AG04450 (cell line): ENCODE measurements at regions of chr5 and their contacts with region 1.

Region 1: DNA sequence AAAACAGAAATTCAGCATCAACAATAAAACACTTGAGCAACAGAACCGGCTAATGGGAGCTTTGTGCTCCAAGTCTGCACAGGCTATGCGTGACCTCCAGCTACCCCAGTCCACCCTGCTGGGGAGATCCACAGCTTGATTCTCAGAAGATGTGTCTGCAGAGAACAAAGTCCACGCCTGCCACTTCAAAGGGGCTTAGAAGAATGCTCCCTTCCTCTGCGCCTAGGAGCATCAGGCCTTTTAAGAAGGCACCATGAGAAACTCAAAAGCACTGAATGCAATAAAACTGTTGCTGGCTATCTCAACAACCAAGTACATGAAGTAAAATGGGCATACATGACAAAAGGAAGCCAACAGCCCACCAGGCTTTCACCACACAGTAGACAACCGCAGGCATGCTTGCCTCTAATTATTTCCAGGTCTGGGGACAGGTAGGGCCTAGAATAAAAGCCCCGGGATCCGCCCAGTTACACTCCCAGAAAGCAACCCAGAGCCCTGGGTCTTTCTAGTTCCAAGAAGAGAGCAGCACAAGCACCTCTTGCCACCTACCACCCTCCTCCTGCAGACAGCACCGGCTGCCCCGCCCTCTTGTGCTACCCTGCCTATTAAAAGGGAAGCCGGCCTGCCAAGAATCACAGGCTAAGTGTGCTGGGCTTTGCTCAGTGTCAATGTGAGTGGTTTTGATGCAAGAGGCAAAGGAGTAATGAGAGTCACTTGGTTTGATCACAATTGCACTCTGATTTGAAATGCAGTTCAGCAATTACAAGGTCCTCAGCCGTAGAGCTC is 123.2 kb downstream of the SPOCK1 start:
- DNase-seq: no peak
- H3K4me3 ChIP-seq: no peak overlapping the region
- H3K27ac ChIP-seq: no peak overlapping the region
- H3K27me3 ChIP-seq: no peaks in the 10 kb centered on the region
- CTCF ChIP-seq: no peak

Region 2: GRCh38 chr5:137292461-137293027 is 83.4 kb before region 1 on chr5:
- CTCF ChIA-PET with region 1: no interaction called
- POLR2A ChIA-PET with region 1: no interaction called
- DNase-seq: no peak
- H3K4me3 ChIP-seq: no peak overlapping the region
- H3K27ac ChIP-seq: no peak overlapping the region
- H3K27me3 ChIP-seq: no peaks in the 10 kb centered on the region
- CTCF ChIP-seq: no peak

Region 3: GRCh38 chr5:137453485-137454080 is 77.6 kb after region 1 on chr5:
- CTCF ChIA-PET with region 1: interaction called, 12 read pairs
- POLR2A ChIA-PET with region 1: no interaction called
- DNase-seq: peak; percentile 8
- H3K4me3 ChIP-seq: no peak overlapping the region
- H3K27ac ChIP-seq: no peak overlapping the region
- H3K27me3 ChIP-seq: no peaks in the 10 kb centered on the region
- CTCF ChIP-seq: no peak

Region 4: GRCh38 chr5:138282920-138283742 is 907.2 kb after region 1 on chr5:
- CTCF ChIA-PET with region 1: no interaction called
- POLR2A ChIA-PET with region 1: no interaction called
- DNase-seq: peak; percentile 20
- H3K4me3 ChIP-seq: no peak overlapping the region
- H3K27ac ChIP-seq: no peak overlapping the region
- H3K27me3 ChIP-seq: no peaks in the 10 kb centered on the region
- CTCF ChIP-seq: peak; percentile 68